Activated CD4-positive, alpha-beta T cell treated with anti-CD3 and anti-CD28 coated beads for 36 hours (primary cell): ENCODE measurements at regions of chr6 and their contacts with region 1.

Region 1: DNA sequence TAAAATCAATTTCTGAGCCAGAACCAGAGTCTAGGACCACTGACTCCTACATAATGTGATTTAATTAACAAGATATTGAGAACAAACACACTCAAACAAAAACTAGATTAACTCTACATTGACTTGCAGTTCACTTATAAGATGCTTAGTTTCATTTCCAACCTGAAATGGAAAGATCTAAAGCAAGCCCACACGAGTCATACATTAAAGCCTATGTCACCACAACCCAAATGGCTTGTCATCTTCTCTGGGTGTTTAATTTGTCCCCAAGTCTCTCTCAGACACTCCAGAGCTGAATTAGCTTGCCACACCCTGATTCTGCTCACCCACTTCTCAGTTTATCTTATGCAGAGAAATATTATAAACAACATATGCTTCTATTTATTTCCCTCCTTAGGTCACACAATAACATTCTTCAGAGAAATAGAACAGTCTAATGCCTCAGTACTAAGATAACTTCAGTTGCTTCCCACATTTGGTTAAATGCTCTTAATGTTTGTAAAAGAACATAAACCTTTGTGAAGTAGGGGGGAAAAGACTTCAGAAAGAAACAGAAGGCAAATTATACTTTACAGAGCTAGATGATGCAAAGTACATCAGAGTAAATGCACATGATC is 8.8 kb upstream of the FBXO30 start:
- DNase-seq: no peak
- ATAC-seq: peak; percentile 94
- H3K4me3 Mint-ChIP-seq: no peak overlapping the region
- H3K27ac Mint-ChIP-seq: no peak overlapping the region
- H3K4me1 Mint-ChIP-seq: peaks cover 33% of the 10 kb centered on the region
- H3K27me3 Mint-ChIP-seq: no peaks in the 10 kb centered on the region

Region 2: GRCh38 chr6:145836170-145836569 is 12.7 kb after region 1 on chr6:
- CTCF ChIA-PET with region 1: interaction called, 3 read pairs
- POLR2A ChIA-PET with region 1: no interaction called
- intact Hi-C with region 1: loop called (anchors 1 to 2 kb)
- DNase-seq: peak; percentile 43
- ATAC-seq: peak; percentile 85
- H3K4me3 Mint-ChIP-seq: no peak overlapping the region
- H3K27ac Mint-ChIP-seq: no peak overlapping the region
- H3K4me1 Mint-ChIP-seq: peaks cover 7% of the 10 kb centered on the region
- H3K27me3 Mint-ChIP-seq: no peaks in the 10 kb centered on the region

Region 3: DNA sequence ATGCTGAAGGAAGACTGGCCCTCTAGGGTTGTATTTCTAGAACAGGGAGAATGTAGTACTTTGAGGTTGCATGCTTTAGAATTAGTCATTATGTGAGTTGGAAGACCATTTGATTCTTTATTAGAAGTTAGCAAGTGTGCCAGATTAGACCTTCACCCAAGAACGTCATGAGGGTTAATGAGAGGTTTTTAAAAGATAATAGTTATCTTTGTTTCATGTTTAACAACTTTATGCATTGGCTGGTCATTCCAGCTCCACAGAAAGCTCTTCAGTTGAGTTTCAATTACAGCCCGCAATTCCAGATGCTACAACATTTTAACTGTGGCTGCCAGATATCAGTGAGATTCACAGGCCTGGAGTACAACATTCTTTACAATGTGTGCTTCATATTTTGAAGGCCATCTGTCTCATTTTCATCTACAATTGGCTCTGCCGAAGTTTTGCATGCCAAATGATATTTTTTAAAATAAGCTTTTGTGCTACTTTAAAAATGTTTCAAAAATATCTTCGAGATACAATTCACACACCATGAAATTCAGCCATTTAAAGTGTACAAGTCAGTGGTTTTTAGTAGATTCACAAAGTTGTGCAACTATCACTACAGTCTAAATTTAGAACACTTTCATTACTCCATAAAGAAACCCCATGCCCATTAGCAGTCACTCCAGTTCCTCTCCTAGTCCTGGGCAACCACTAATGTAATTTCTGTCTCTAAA is 52.2 kb after region 1 on chr6:
- CTCF ChIA-PET with region 1: no interaction called
- POLR2A ChIA-PET with region 1: no interaction called
- intact Hi-C with region 1: no loop called
- DNase-seq: no peak
- ATAC-seq: no peak
- H3K4me3 Mint-ChIP-seq: no peak overlapping the region
- H3K27ac Mint-ChIP-seq: no peak overlapping the region
- H3K4me1 Mint-ChIP-seq: no peaks in the 10 kb centered on the region
- H3K27me3 Mint-ChIP-seq: no peaks in the 10 kb centered on the region